Endothelial cell of umbilical vein (primary cell): ENCODE measurements at regions of chr2 and their contacts with region 1.

Region 1: GRCh38 chr2:71100195-71100964 is 29.6 kb downstream of the MCEE start:
- DNase-seq: peak; percentile 66
- H3K4me3 ChIP-seq: no peak overlapping the region
- H3K27ac ChIP-seq: no peak overlapping the region
- H3K4me1 ChIP-seq: no peaks in the 10 kb centered on the region
- H3K27me3 ChIP-seq: no peaks in the 10 kb centered on the region
- CTCF ChIP-seq: peak; percentile 76 to 81
- POLR2A ChIP-seq: no peak

Region 2: GRCh38 chr2:70024284-70024994 is 1075.9 kb before region 1 on chr2:
- CTCF ChIA-PET with region 1: no interaction called
- POLR2A ChIA-PET with region 1: no interaction called
- dilution Hi-C with region 1: no loop called
- intact Hi-C with region 1: loop called (anchors 5 kb)
- DNase-seq: no peak
- H3K4me3 ChIP-seq: no peak overlapping the region
- H3K27ac ChIP-seq: no peak overlapping the region
- H3K4me1 ChIP-seq: no peaks in the 10 kb centered on the region
- H3K27me3 ChIP-seq: no peaks in the 10 kb centered on the region
- CTCF ChIP-seq: no peak
- POLR2A ChIP-seq: no peak

Region 3: GRCh38 chr2:70887550-70888246 is 212.7 kb before region 1 on chr2:
- CTCF ChIA-PET with region 1: no interaction called
- POLR2A ChIA-PET with region 1: no interaction called
- dilution Hi-C with region 1: no loop called
- intact Hi-C with region 1: no loop called
- DNase-seq: no peak
- H3K4me3 ChIP-seq: peak overlapping the region in 1 of 3 experiments; percentile 11
- H3K27ac ChIP-seq: no peak overlapping the region
- H3K4me1 ChIP-seq: peaks cover 8% of the 10 kb centered on the region
- H3K27me3 ChIP-seq: peaks cover 82 to 100% of the 10 kb centered on the region in 2 experiments
- CTCF ChIP-seq: no peak
- POLR2A ChIP-seq: no peak

Region 4: GRCh38 chr2:71082402-71083252 is 17.8 kb before region 1 on chr2:
- CTCF ChIA-PET with region 1: interaction called, 10 read pairs
- POLR2A ChIA-PET with region 1: no interaction called
- dilution Hi-C with region 1: no loop called
- intact Hi-C with region 1: no loop called
- DNase-seq: no peak
- H3K4me3 ChIP-seq: no peak overlapping the region
- H3K27ac ChIP-seq: no peak overlapping the region
- H3K4me1 ChIP-seq: no peaks in the 10 kb centered on the region
- H3K27me3 ChIP-seq: peaks cover 0 to 3% of the 10 kb centered on the region in 2 experiments
- CTCF ChIP-seq: no peak
- POLR2A ChIP-seq: no peak

Region 5: GRCh38 chr2:71130113-71130904 is 29.9 kb after region 1 on chr2 and contains the starts of genes MCEE and MPHOSPH10:
- CTCF ChIA-PET with region 1: interaction called, 15 read pairs
- POLR2A ChIA-PET with region 1: no interaction called
- dilution Hi-C with region 1: no loop called
- intact Hi-C with region 1: loop called (anchors 1 kb)
- DNase-seq: peak; percentile 89
- H3K4me3 ChIP-seq: peak within 1 kb of the TSS; percentile 53 to 92 (median 90)
- H3K27ac ChIP-seq: peak within 1 kb of the TSS; percentile 72
- H3K4me1 ChIP-seq: peaks cover 16% of the 10 kb centered on the region
- H3K27me3 ChIP-seq: no peaks in the 10 kb centered on the region
- CTCF ChIP-seq: no peak
- POLR2A ChIP-seq: peak; percentile 90
- total RNA-seq, gene MCEE: 6.8 and 9.9 TPM in 2 replicates
- total RNA-seq, gene MPHOSPH10: 31.4 and 38.8 TPM in 2 replicates

Region 6: GRCh38 chr2:71157124-71157793 is 56.9 kb after region 1 on chr2:
- CTCF ChIA-PET with region 1: interaction called, 24 read pairs
- POLR2A ChIA-PET with region 1: no interaction called
- dilution Hi-C with region 1: no loop called
- intact Hi-C with region 1: no loop called
- DNase-seq: peak; percentile 42
- H3K4me3 ChIP-seq: no peak overlapping the region
- H3K27ac ChIP-seq: no peak overlapping the region
- H3K4me1 ChIP-seq: no peaks in the 10 kb centered on the region
- H3K27me3 ChIP-seq: peaks cover 0 to 7% of the 10 kb centered on the region in 2 experiments
- CTCF ChIP-seq: peak; percentile 57 to 85
- POLR2A ChIP-seq: no peak

Region 7: DNA sequence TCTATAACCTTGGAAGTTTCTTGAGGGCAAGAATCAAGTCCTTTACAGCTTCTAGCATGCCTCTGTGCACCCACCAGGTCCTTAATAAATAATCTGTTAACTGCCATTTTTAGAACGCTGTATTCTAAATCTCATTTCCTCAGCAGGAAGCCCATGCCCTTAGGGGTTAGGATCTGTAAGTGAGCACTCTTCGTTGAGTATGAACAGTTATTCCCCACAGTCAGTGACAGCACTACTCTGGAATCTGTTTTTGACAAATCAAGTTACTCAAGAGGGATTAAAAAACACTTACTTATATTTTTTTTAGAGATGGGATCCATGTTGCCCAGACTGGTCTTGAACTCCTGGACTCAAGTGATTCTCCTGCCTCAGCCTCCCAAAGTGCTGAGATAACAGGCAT is 112.0 kb after region 1 on chr2:
- CTCF ChIA-PET with region 1: no interaction called
- POLR2A ChIA-PET with region 1: no interaction called
- dilution Hi-C with region 1: no loop called
- intact Hi-C with region 1: no loop called
- DNase-seq: no peak
- H3K4me3 ChIP-seq: no peak overlapping the region
- H3K27ac ChIP-seq: no peak overlapping the region
- H3K4me1 ChIP-seq: no peaks in the 10 kb centered on the region
- H3K27me3 ChIP-seq: peaks cover 8 to 23% of the 10 kb centered on the region in 2 experiments
- CTCF ChIP-seq: no peak
- POLR2A ChIP-seq: no peak

Region 8: GRCh38 chr2:71235930-71236587 is 135.7 kb after region 1 on chr2:
- CTCF ChIA-PET with region 1: no interaction called
- POLR2A ChIA-PET with region 1: no interaction called
- dilution Hi-C with region 1: no loop called
- intact Hi-C with region 1: no loop called
- DNase-seq: no peak
- H3K4me3 ChIP-seq: no peak overlapping the region
- H3K27ac ChIP-seq: no peak overlapping the region
- H3K4me1 ChIP-seq: no peaks in the 10 kb centered on the region
- H3K27me3 ChIP-seq: peaks cover 11 to 16% of the 10 kb centered on the region in 2 experiments
- CTCF ChIP-seq: no peak
- POLR2A ChIP-seq: no peak